ENCODE measurements at regions of chr12 and their contacts with region 1.

Region 1: DNA sequence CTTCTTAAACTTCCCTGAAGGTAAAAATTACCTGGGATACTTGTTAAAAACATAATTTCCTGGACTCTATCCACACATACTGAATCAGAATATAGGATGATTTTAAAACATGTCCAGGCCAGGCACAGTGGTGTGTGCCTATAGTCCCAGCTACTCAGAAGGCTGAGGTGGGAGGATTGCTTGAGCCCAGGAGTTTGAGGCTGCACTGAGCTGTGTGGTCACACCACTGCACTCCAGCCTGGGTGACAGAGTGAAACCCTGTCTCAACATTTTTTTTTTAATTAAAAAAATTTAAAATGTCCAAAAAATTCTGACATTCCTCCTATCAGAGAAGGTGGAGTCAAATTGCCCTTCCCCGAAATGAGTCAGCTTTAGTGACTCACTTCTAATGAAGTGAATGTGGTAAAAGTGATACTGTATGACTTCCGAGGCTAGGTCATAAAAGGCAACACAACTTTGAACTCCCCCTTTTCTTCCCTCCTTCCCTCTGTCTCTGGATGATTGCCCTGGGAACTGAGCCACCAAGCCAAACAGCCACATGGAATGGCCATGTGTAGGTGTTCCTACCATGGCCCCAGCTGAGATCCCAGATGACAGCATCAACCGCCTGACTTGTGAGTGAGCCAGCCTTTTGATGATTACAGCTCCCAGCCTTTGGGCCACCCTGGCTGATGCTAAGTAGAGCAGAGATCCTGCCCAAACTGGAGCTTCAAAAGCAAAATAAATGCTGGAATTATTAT is 36.3 kb downstream of the LIMA1 start:
- DNase-seq: peak; percentile 59
- ATAC-seq: no peak
- H3K4me3 ChIP-seq: no peak overlapping the region
- H3K27ac ChIP-seq: peak overlapping the region; percentile 46
- H3K4me1 ChIP-seq: peaks cover 66% of the 10 kb centered on the region
- H3K27me3 ChIP-seq: no peaks in the 10 kb centered on the region
- CTCF ChIP-seq: no peak
- EP300 ChIP-seq: no peak
- POLR2A ChIP-seq: no peak
- RAD21 ChIP-seq: no peak

Region 2: GRCh38 chr12:50390284-50390683 is 143.2 kb after region 1 on chr12:
- CTCF ChIA-PET with region 1: no interaction called
- POLR2A ChIA-PET with region 1: no interaction called
- in situ Hi-C with region 1: no loop called
- intact Hi-C with region 1: loop called (anchors 10 kb)
- DNase-seq: peak; percentile 61
- ATAC-seq: no peak
- H3K4me3 ChIP-seq: no peak overlapping the region
- H3K27ac ChIP-seq: no peak overlapping the region
- H3K4me1 ChIP-seq: peaks cover 52% of the 10 kb centered on the region
- H3K27me3 ChIP-seq: no peaks in the 10 kb centered on the region
- CTCF ChIP-seq: no peak
- EP300 ChIP-seq: no peak
- POLR2A ChIP-seq: no peak
- RAD21 ChIP-seq: no peak

Measured in HepG2 (cell line).